Uterus (tissue), 4 donors: ENCODE measurements at regions of chr1 and their contacts with region 1.

Region 1: GRCh38 chr1:26279456-26280332 is at the start of gene SH3BGRL3:
- DNase-seq: peak; percentile 83 to 85
- H3K4me3 ChIP-seq: peak within 1 kb of the TSS; percentile 56 to 85
- H3K27ac ChIP-seq: peak within 1 kb of the TSS; percentile 93
- H3K4me1 ChIP-seq: peaks cover 3 to 19% of the 10 kb centered on the region in 2 donors
- H3K27me3 ChIP-seq: no peaks in the 10 kb centered on the region
- CTCF ChIP-seq: peak; percentile 21 to 53 (median 32)
- POLR2A ChIP-seq: peak; percentile 87 to 95
- total RNA-seq, gene SH3BGRL3: 5.0 to 86.6 (median 52.3) TPM

Region 2: DNA sequence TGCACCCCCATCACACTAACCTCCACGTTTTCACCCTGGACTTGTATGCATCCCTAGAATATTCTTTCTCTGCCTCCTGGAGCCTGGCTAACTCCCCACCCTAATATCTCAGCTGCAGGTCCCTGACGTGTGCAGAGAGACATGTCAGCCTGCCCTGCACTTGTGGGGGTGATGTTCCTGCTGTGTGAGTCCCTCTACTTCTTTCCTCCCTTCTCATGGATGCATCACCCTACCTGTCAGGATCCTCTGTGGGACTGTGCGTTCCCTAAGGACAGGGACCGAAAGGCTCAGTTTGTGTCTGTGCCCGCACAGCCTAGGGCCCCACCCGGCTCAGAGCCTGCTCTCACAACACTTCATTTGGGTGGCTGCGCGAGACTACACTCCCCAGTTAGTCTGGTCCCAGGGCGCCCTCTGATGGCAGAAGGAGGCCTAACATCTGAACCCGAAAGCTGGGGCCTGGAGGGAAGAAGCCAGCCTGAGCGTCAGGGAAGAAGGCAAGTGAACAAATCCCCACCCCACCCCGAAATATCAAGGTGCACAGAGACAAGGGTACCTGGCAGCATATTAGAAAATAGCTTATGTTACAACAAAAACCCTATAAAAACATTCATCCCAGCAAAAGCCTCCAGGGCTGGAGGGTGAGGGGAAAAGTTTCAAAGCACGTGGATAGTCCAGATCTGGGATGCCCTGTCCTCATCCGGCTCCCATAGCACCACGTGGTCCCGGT is 41.8 kb after region 1 on chr1:
- intact Hi-C with region 1: loop called (anchors 5 kb)
- DNase-seq: peak; percentile 87 to 88
- H3K4me3 ChIP-seq: no peak overlapping the region
- H3K27ac ChIP-seq: no peak overlapping the region
- H3K4me1 ChIP-seq: no peaks in the 10 kb centered on the region
- H3K27me3 ChIP-seq: no peaks in the 10 kb centered on the region
- CTCF ChIP-seq: peak; percentile 80 to 95 (median 86)
- POLR2A ChIP-seq: no peak